ENCODE measurements at regions of chr5 and their contacts with region 1.

Region 1: DNA sequence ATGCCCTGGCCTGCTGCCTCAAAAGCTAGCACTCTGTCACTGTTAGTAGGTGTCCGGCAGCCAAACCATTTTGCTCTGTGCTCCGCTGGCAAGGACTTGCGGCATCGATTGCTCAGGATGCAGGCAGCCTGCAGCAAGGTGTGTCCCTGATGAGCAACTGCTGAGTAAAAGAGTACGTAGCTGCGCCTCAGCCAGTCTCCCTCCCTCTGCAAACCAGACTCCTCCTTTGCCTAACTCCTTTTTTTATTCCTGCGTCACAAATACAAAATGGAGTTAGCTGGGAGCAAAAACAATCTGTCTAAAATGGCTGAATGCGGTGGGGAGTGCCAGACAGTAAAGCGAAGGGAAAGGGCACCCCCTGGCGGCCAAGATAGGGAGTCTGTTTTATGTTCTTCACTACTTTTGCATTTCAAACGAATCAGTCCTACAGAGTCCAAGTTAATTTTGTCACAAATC is 61.1 kb downstream of the DIAPH1 start:
- DNase-seq: peak; percentile 91
- H3K4me3 Mint-ChIP-seq: no peak overlapping the region
- H3K27ac Mint-ChIP-seq: peak overlapping the region; percentile 50
- H3K4me1 Mint-ChIP-seq: peaks cover 23% of the 10 kb centered on the region
- H3K27me3 Mint-ChIP-seq: no peaks in the 10 kb centered on the region

Region 2: GRCh38 chr5:141192110-141192732 is 365.5 kb before region 1 on chr5 and contains the start of gene PCDHB10:
- intact Hi-C with region 1: loop called (anchors 10 kb)
- DNase-seq: peak; percentile 73
- H3K4me3 Mint-ChIP-seq: no peak within 1 kb of the TSS
- H3K27ac Mint-ChIP-seq: no peak within 1 kb of the TSS
- H3K4me1 Mint-ChIP-seq: no peaks in the 10 kb centered on the region
- H3K27me3 Mint-ChIP-seq: peaks cover 2% of the 10 kb centered on the region
- total RNA-seq, gene PCDHB10: not detected in 2 replicates

Region 3: DNA sequence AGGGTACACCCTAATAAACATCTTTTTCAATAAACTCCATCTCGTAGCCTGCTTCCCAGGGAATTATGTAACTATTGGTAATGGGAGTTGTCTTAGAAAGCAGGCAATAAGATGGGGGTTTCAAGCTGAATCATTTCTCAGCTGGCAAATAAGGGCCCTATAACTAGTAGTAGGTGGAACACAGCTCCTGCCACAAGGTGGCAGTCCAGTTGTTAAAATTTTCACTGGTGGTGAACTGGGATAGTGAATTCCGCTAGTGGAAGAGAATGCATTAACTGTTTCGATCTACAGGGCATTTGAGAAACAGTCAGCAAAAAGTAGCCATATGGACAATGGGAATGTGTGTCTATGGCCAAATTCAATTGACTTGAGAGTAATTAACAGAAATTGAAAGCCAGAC is 284.8 kb before region 1 on chr5:
- intact Hi-C with region 1: no loop called
- DNase-seq: no peak
- H3K4me3 Mint-ChIP-seq: no peak overlapping the region
- H3K27ac Mint-ChIP-seq: no peak overlapping the region
- H3K4me1 Mint-ChIP-seq: no peaks in the 10 kb centered on the region
- H3K27me3 Mint-ChIP-seq: no peaks in the 10 kb centered on the region

Region 4: DNA sequence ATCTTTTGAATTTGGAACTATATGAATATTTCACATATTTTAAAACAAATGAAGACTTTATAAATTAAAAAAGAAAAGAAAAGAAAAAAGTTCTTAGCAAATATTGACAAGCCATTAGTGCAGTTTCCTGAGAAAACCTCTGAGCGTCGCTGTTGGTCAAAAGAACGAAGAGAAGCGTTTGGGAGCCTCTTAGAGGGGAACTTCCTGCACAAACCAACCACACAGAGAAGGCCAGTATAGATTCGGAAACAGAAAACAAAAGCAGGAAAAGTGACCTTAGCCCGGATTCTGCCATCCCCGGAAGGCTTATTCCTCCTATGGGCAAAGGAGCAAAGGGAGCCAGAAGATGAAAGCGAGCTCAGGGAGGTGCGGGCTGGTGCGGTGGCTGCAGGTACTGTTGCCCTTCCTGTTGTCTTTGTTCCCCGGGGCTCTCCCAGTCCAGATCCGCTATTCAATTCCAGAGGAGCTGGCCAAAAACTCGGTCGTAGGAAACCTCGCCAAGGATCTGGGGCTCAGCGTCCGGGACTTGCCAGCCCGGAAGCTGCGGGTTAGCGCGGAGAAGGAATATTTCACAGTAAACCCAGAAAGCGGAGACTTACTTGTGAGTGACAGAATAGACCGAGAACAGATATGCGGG is 197.8 kb before region 1 on chr5 and contains the start of gene PCDHGB2:
- intact Hi-C with region 1: loop called (anchors 5 kb)
- DNase-seq: peak; percentile 73
- H3K4me3 Mint-ChIP-seq: peak within 1 kb of the TSS; percentile 80
- H3K27ac Mint-ChIP-seq: peak within 1 kb of the TSS; percentile 18
- H3K4me1 Mint-ChIP-seq: no peaks in the 10 kb centered on the region
- H3K27me3 Mint-ChIP-seq: peaks cover 32% of the 10 kb centered on the region
- total RNA-seq, gene PCDHGB2: 0.63 and 0.97 TPM in 2 replicates

Region 5: GRCh38 chr5:141412854-141413539 is 144.7 kb before region 1 on chr5 and contains the start of gene PCDHGA10:
- intact Hi-C with region 1: loop called (anchors 2 kb)
- DNase-seq: peak; percentile 86
- H3K4me3 Mint-ChIP-seq: peak within 1 kb of the TSS; percentile 86
- H3K27ac Mint-ChIP-seq: no peak within 1 kb of the TSS
- H3K4me1 Mint-ChIP-seq: peaks cover 12% of the 10 kb centered on the region
- H3K27me3 Mint-ChIP-seq: peaks cover 51% of the 10 kb centered on the region
- total RNA-seq, gene PCDHGA10: 0.07 and 0.21 TPM in 2 replicates

Region 6: DNA sequence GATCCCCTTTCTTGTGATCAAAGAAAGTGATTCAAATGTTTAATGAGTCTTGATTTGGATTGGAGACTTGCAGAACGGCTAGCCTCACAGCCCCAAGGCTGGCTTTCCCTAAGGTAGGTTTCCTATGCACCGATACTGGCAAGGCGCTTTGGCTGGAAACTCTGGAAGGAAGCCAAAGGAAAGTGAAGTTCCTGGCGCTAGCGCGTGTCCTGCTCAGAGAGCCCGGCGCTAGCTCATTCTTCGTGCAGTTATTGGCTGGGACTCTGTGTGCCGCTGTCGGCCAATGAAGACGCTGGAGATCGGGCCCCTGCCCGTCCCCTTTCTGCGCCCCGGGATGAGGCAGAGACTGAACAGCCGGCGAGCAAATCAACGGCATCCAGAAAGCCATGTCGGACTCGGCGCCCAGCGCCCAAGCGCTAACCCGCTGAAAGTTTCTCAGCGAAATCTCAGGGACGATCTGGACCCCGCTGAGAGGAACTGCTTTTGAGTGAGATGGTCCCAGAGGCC is 82.0 kb before region 1 on chr5 and contains the start of gene PCDHGC3:
- intact Hi-C with region 1: loop called (anchors 5 kb)
- DNase-seq: peak; percentile 78
- H3K4me3 Mint-ChIP-seq: peak within 1 kb of the TSS; percentile 91
- H3K27ac Mint-ChIP-seq: no peak within 1 kb of the TSS
- H3K4me1 Mint-ChIP-seq: peaks cover 18% of the 10 kb centered on the region
- H3K27me3 Mint-ChIP-seq: peaks cover 60% of the 10 kb centered on the region
- total RNA-seq, gene PCDHGC3: 0.24 and 0.58 TPM in 2 replicates

Region 7: DNA sequence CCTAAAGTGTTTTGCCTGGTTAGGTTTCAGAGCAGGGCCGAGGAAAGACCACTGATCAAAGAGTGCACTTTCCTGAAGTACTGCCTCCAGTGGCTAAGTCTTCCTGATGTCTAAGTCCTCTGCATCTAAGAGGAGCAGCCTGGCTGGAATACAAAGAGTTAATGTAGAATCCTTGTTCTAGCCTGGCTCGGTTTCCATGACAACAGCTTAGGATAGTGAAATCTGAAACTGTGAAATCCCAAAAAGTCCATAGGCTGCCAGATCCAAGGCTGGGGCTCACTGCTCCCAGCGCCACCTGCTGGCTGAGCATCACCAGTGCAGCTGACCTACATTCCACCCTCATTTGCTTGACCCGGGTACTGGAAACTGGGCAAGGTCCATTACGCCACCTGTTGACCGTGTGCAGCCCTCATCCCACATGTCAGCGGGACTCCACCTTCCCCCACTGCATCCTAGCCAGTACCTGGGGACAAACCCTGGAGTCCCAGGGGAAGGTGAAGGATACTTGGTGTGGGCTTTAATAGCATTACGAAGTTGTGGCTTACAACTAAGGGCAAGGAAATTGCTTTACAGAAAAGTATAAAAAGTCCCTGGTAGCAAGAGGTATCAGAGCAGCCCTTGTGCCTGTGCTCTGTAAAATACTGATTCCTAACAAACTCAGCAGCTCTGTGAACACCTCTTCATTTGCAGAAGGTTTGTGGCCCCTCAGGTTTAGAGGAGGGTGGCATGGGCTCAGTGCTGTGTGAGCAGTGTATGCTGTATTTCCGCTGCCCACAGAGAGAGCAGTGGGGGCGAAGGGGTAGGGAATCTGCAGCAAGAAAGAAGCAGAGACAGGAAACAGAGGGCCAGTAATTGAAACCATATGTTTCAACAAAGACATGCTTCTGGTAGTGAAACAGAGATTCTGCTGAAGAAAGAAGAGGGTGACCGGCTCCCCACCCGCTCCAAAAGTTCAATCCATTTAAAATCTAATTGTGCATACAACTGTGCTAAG is 32.8 kb before region 1 on chr5:
- intact Hi-C with region 1: loop called (anchors 2 kb)
- DNase-seq: peak; percentile 85
- H3K4me3 Mint-ChIP-seq: no peak overlapping the region
- H3K27ac Mint-ChIP-seq: peak overlapping the region; percentile 10
- H3K4me1 Mint-ChIP-seq: peaks cover 29% of the 10 kb centered on the region
- H3K27me3 Mint-ChIP-seq: no peaks in the 10 kb centered on the region

Measured in activated CD4-positive, alpha-beta T cell treated with anti-CD3 and anti-CD28 coated beads, Interleukin-2, amount 10 ng/mL, durations not matched to agents 24 days and 14 days (primary cell).